Left ventricle myocardium inferior (tissue), 1 donor: ENCODE measurements at regions of chr3 and their contacts with region 1.

Region 1: DNA sequence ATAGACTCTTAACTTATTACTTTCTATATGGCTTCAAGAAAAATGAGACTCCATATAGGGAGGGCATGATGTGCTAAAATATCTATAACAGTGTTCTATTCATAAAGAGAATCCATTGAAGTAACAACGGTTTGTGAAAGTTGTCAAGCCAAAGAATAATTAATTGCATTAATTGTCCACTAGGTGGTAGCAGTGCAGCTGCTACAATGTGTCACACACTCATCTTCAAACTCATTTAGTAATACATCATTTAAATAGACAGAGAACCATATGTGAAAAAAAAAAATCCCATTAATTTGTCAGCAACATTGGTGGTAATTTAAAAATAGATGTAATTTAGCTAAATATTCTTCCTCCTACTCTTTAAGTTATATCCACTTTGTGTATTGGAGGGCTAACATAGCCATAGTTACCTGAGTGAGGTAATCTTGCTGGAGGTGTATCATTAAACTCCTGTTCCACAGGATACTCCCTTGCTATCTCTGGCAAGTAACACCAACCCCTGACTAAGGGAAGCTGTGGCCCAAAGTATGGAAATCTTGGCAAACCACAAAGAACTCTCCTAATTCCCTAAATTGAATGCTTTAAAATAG is 3.7 kb upstream of the CPA3 start:
- DNase-seq: no peak
- H3K4me3 ChIP-seq: no peak overlapping the region
- H3K27ac ChIP-seq: no peak overlapping the region
- H3K4me1 ChIP-seq: no peaks in the 10 kb centered on the region
- H3K27me3 ChIP-seq: peaks cover 26% of the 10 kb centered on the region
- CTCF ChIP-seq: peak; percentile 81

Region 2: DNA sequence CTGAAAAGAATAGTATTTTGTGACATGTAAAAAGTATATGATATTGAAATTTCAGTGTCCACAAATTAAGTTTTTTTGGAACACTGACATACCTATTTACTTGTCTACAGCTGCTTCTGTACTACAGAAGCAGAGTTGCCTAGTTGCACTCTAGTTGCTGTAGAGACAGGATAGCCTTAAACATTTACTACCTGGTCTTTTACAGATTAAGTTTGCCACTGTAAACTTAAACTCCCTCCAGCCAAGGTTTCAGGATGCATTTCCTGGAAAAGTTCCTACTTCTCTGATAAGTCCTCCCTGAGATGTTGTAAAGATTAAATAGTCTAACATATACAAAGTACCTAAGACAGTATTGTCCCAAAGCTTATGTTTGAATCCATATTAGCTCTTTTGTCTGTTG is 181.1 kb before region 1 on chr3:
- intact Hi-C with region 1: no loop called
- DNase-seq: no peak
- H3K4me3 ChIP-seq: no peak overlapping the region
- H3K27ac ChIP-seq: no peak overlapping the region
- H3K4me1 ChIP-seq: no peaks in the 10 kb centered on the region
- H3K27me3 ChIP-seq: no peaks in the 10 kb centered on the region
- CTCF ChIP-seq: no peak

Region 3: DNA sequence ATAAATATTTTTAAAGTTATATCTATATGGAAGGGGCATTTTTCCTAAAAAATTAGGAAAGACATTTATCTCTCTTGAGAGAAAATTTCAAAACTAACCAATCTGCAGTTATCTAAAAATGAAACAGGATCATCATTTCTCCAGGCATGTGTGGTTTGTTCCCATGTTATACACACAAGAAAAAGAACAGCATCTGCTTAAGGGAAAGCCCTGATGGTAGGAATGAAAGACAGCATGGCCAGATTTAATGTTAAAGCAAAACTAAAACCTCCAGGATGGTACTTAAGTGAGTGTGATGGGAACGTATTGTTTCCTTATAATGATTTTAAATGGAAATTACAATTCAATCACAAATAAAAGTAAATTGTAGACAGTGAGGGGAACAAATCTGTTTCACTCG is 83.7 kb after region 1 on chr3:
- intact Hi-C with region 1: loop called (anchors 5 kb)
- DNase-seq: no peak
- H3K4me3 ChIP-seq: no peak overlapping the region
- H3K27ac ChIP-seq: no peak overlapping the region
- H3K4me1 ChIP-seq: no peaks in the 10 kb centered on the region
- H3K27me3 ChIP-seq: no peaks in the 10 kb centered on the region
- CTCF ChIP-seq: no peak

Region 4: GRCh38 chr3:149016669-149017541 is 155.5 kb after region 1 on chr3:
- intact Hi-C with region 1: no loop called
- DNase-seq: no peak
- H3K4me3 ChIP-seq: no peak overlapping the region
- H3K27ac ChIP-seq: peak overlapping the region; percentile 74
- H3K4me1 ChIP-seq: peaks cover 76% of the 10 kb centered on the region
- H3K27me3 ChIP-seq: no peaks in the 10 kb centered on the region
- CTCF ChIP-seq: no peak